Activated CD4-positive, alpha-beta T cell treated with anti-CD3 and anti-CD28 coated beads, Interleukin-2, amount 10 ng/mL, durations not matched to agents 24 days and 14 days (primary cell): ENCODE measurements at regions of chrX and their contacts with region 1.

Region 1: GRCh38 chrX:65744965-65745364 is 77.5 kb downstream of the MSN start:
- DNase-seq: no peak
- H3K4me3 Mint-ChIP-seq: no peak overlapping the region
- H3K27ac Mint-ChIP-seq: no peak overlapping the region
- H3K4me1 Mint-ChIP-seq: peaks cover 36% of the 10 kb centered on the region
- H3K27me3 Mint-ChIP-seq: no peaks in the 10 kb centered on the region

Region 2: GRCh38 chrX:65731684-65732289 is 13.2 kb before region 1 on chrX:
- intact Hi-C with region 1: loop called (anchors 1 kb)
- DNase-seq: no peak
- H3K4me3 Mint-ChIP-seq: no peak overlapping the region
- H3K27ac Mint-ChIP-seq: peak overlapping the region; percentile 79
- H3K4me1 Mint-ChIP-seq: peaks cover 28% of the 10 kb centered on the region
- H3K27me3 Mint-ChIP-seq: no peaks in the 10 kb centered on the region